GM18951 (cell line): ENCODE measurements at regions of chr5 and their contacts with region 1.

Region 1: DNA sequence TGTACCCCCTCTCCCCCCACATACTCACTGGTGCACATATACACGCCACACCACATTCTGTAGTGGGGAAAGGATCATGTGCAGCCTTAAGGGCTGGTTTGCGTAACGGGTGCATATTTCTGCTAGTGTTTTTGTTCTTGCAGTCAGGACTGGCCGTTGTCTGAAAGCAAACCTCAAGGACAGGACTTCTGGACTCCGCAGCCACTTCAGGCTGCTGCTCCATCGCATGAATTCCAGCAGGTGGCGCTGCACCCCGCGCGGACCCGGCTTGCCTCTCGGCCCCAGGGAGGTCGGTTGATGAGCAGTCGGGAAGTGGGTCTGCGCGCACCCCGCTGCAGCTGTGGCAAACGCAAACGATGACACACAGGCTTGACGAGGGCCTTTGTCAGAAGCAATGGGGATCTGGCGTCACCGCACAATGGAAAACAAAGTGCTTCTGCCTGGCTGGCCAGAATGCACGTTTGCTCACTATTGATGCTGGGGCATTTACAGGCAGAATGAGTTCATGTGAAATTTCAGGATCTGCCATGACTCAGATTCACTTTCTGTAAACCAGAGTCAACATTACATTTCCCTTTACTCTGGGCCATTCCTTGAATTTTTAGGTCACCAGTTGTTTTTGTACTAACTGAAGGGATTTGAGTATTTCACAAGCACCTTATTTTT is 36.3 kb upstream of the GLRX start:
- POLR2A ChIP-seq: no peak

Region 2: GRCh38 chr5:96324708-96325107 is 465.9 kb after region 1 on chr5:
- in situ Hi-C with region 1: loop called (anchors 5 kb)
- POLR2A ChIP-seq: no peak

Region 3: GRCh38 chr5:96434201-96434645 is 575.4 kb after region 1 on chr5:
- in situ Hi-C with region 1: loop called (anchors 25 kb)
- POLR2A ChIP-seq: no peak

Region 4: DNA sequence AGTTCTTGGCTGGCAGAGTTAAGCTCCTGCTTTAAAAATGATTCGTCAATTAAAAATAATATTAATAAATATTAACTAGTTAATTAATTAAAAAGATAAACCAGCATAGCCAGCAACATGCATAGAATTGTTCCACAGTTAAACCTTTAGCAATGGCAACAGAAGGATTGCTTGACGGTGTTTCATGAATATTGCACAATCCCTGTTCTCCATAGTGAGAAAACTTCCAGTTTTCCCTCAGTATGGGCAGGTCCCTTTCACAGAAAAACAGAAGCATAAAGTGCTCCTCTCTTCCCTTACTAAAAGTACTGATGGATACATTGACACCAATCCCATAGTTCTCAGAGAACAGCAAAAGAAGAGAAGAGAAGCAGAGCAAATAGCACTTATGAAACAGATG is 732.0 kb after region 1 on chr5:
- in situ Hi-C with region 1: loop called (anchors 5 kb)
- POLR2A ChIP-seq: no peak

Region 5: DNA sequence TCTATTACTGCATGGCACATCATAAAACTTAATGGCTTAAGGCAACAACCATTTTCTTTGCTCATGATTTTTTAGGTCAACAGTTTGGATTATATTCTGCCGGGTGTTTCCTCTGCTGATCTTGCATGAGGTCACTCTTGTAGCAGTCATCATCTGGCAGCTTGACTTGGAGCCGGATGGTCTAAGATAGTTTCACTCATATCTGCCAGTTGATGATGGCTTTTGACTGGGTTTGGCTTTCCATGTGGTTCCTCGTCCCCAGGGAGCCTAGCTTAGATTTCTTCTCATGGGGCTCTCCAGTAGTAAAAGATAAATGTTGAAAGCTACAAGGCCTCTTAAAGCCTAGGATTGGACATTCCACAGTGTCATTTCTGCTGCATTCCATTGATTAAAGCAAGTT is 1104.5 kb after region 1 on chr5:
- in situ Hi-C with region 1: no loop called
- POLR2A ChIP-seq: no peak